ENCODE measurements at regions of chr12 and their contacts with region 1.

Region 1: DNA sequence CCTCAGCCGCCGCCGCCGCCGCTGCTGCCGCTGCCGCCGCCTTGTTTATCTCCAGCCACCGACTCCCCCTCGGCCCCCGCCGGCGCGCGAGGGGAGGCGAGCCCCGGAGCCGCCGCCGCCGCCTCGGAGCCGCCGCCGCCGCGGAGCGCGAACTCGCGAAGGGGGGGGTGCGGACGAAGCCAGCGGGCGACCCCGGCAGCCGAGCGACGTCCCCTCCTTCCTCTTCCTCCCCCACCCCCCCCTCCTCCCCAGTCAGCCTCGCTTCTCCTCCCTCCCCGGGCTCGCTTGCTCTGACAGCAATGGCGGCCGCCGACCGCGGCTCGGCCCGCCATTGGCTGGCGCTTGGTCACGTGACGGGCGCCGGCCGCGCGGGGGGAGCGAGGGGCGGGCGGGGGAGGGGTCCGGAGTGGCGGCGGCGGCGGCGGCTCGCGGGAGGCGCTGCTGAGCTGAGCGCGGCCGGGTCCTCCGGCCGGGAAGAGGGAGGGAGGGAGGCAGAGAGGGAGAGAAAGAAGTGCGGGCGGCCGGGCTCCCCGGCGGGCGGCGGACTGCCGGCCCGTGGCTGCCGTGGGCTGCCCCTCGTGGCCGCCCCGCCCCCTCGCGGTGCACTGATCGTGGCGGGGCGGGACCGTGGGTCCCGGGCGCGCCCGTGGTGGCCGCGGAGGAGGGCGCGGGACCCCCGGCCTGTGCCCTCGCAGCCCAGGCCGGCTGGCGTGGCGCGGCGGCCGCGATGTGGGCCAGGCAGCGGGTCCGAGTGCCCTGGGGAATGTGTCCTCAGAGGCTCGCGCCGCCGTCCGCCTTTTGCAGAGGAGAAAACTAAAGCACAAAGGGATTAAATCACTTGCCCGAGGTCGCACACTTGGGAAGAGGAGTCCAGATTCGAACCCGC is at the start of gene MED13L:
- DNase-seq: peak; percentile 91
- H3K4me3 Mint-ChIP-seq: peak within 1 kb of the TSS; percentile 93
- H3K27ac Mint-ChIP-seq: peak within 1 kb of the TSS; percentile 86
- H3K4me1 Mint-ChIP-seq: peaks cover 36% of the 10 kb centered on the region
- H3K27me3 Mint-ChIP-seq: no peaks in the 10 kb centered on the region
- total RNA-seq, gene MED13L: 37.7 to 41.4 TPM

Region 2: GRCh38 chr12:115998119-115998633 is 279.5 kb before region 1 on chr12:
- CTCF ChIA-PET with region 1: interaction called, 5 read pairs
- POLR2A ChIA-PET with region 1: interaction called, 4 read pairs
- intact Hi-C with region 1: loop called (anchors 5 kb)
- DNase-seq: peak; percentile 13
- H3K4me3 Mint-ChIP-seq: no peak overlapping the region
- H3K27ac Mint-ChIP-seq: no peak overlapping the region
- H3K4me1 Mint-ChIP-seq: peaks cover 4% of the 10 kb centered on the region
- H3K27me3 Mint-ChIP-seq: no peaks in the 10 kb centered on the region

Region 3: GRCh38 chr12:116142936-116143898 is 134.4 kb before region 1 on chr12:
- CTCF ChIA-PET with region 1: interaction called, 5 read pairs
- POLR2A ChIA-PET with region 1: no interaction called
- intact Hi-C with region 1: loop called (anchors 5 kb)
- DNase-seq: no peak
- H3K4me3 Mint-ChIP-seq: no peak overlapping the region
- H3K27ac Mint-ChIP-seq: peak overlapping the region; percentile 42
- H3K4me1 Mint-ChIP-seq: peaks cover 51% of the 10 kb centered on the region
- H3K27me3 Mint-ChIP-seq: no peaks in the 10 kb centered on the region

Region 4: DNA sequence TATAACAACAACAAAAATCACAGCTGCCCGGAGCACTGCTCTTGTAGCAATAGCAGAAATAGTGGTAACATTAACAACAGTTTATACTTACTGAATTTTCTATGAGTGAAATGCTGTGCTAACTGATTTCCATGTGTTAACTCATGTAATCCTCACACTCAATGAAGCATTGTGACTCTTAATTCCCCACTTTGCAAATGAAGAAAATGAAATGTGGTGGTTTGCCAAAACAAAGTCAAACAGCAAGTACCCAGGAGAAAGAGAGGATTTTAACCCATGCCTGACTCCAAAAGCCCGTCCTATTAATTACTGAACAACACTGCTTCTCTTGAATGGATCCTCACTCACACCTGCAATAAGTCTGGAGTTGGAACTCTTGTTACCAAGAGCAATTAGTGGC is 123.7 kb before region 1 on chr12:
- CTCF ChIA-PET with region 1: no interaction called
- POLR2A ChIA-PET with region 1: no interaction called
- intact Hi-C with region 1: no loop called
- DNase-seq: no peak
- H3K4me3 Mint-ChIP-seq: no peak overlapping the region
- H3K27ac Mint-ChIP-seq: no peak overlapping the region
- H3K4me1 Mint-ChIP-seq: peaks cover 44% of the 10 kb centered on the region
- H3K27me3 Mint-ChIP-seq: no peaks in the 10 kb centered on the region

Region 5: GRCh38 chr12:116303929-116304328 is 26.3 kb after region 1 on chr12:
- CTCF ChIA-PET with region 1: no interaction called
- POLR2A ChIA-PET with region 1: no interaction called
- intact Hi-C with region 1: no loop called
- DNase-seq: no peak
- H3K4me3 Mint-ChIP-seq: no peak overlapping the region
- H3K27ac Mint-ChIP-seq: no peak overlapping the region
- H3K4me1 Mint-ChIP-seq: no peaks in the 10 kb centered on the region
- H3K27me3 Mint-ChIP-seq: no peaks in the 10 kb centered on the region

Region 6: GRCh38 chr12:116559162-116559935 is 281.7 kb after region 1 on chr12 and contains the start of gene MAP1LC3B2:
- CTCF ChIA-PET with region 1: no interaction called
- POLR2A ChIA-PET with region 1: no interaction called
- intact Hi-C with region 1: loop called (anchors 1 kb)
- DNase-seq: peak; percentile 88
- H3K4me3 Mint-ChIP-seq: peak within 1 kb of the TSS; percentile 69
- H3K27ac Mint-ChIP-seq: peak within 1 kb of the TSS; percentile 95
- H3K4me1 Mint-ChIP-seq: peaks cover 34% of the 10 kb centered on the region
- H3K27me3 Mint-ChIP-seq: no peaks in the 10 kb centered on the region
- total RNA-seq, gene MAP1LC3B2: 0.78 to 1.2 TPM

Region 7: DNA sequence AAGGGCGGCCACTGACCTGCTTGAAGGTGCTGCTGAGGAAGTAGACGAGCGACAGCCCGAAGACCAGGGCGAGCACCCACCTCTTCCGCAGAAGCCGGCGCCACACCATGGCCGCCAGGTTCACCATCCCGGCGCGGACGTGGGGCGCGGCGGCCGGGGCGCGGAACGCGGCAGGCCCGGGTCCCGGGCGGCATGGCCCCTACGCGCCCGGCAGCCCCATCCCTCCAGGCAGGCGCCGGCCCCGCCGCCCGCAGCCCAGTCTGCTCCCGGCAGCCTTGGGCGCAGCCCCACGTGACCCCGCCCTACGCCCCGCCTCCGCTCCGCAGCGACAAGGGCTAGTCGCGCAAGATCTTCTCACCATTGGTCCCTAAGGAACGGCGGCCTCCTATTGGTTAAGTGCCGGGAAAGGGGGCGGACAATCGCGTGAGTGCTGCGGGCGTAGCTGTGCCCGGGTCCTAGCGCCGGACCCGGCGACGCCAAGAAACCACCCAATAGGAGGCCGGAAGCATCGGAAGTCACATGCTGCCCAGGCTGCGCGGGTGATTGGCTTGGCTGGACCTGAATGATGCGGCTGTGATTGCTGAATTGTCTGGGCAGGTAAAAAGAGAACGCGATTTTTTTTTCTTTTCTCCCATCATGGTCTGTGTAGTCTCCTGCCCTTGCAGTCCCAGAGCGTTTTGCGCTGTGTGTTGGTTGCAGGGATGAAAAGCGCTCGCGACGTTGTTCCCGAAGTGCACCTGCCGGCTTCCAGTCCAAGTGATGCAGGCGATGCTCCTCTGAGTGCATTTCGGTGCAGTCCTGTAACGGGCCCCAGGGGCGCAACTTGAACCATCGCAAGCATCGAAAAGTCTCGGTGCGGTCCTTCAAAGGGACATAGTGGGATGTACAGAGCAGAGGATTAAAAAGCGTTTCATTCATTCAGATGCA is 460.4 kb after region 1 on chr12 and contains the starts of genes RNFT2 and SPRING1:
- CTCF ChIA-PET with region 1: no interaction called
- POLR2A ChIA-PET with region 1: no interaction called
- intact Hi-C with region 1: loop called (anchors 10 kb)
- DNase-seq: peak; percentile 99
- H3K4me3 Mint-ChIP-seq: peak within 1 kb of the TSS; percentile 87
- H3K27ac Mint-ChIP-seq: peak within 1 kb of the TSS; percentile 72
- H3K4me1 Mint-ChIP-seq: peaks cover 31% of the 10 kb centered on the region
- H3K27me3 Mint-ChIP-seq: no peaks in the 10 kb centered on the region
- total RNA-seq, gene RNFT2: 15.8 to 15.9 TPM
- total RNA-seq, gene SPRING1: 20.9 to 24.3 TPM

Measured in activated CD4-positive, alpha-beta memory T cell treated with anti-CD3 and anti-CD28 coated beads for 36 hours (primary cell).